Ovary (tissue), 10 donors: ENCODE measurements at regions of chr7 and their contacts with region 1.

Region 1: DNA sequence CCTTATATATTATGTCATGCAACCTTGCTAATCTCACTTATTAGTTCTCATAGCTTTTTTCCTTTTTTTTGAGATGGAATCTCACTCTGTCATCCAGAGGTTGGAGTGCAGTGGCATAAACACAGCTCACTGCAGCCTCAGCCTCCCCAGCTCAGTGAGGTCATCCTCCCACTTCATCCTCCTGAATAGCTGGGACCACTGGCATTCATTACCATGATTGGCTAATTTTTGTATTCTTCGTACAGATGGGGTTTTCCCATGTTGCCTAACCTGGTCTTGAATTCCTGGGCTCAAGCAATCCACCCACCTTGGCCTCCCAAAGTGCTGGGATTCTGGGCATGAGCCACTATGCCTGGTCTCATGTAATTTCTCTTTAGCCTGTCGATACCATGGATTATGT is 89.1 kb upstream of the TRIM24 start:
- DNase-seq: no peak
- H3K4me3 ChIP-seq: no peak overlapping the region
- H3K27ac ChIP-seq: no peak overlapping the region
- H3K4me1 ChIP-seq: no peaks in the 10 kb centered on the region
- H3K27me3 ChIP-seq: no peaks in the 10 kb centered on the region
- CTCF ChIP-seq: no peak
- EP300 ChIP-seq: no peak
- POLR2A ChIP-seq: no peak

Region 2: DNA sequence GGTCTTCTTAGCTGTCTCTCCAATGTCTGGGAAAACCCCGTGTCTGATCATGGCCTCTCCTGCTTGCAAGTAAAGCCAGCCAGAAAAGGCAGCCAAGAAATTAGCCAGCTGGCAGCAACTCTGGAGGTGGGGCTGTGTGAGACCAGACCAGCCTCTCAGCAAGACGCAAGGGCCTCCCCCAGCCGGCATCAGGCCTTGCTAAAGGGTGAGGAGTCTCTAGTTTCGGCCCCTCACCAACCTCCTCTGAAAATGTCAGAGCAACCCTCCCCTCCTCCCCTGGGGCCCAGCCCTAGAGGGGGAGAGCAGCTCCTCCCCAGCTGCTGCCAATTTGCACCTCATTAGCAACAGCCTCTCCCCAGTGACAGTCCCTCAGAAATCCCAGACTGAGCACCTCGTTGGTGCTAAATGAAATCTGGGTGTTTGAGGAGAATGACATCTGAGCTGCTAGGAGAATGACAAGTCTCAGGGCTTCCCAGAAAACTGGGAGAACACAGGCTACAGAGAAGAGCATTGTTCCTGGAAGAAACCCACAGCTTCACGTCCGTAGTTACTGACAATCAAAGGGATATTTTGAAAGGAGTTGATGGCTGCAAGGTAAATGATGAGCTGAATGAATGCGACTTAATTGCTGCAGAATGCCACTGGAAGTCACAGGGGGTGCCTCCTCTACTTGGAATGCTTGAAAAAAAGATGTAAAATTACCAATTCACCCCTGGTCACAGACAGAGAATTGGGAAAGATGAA is 550.1 kb before region 1 on chr7:
- intact Hi-C with region 1: no loop called
- DNase-seq: peak in 4 of 5 donors; percentile 10 to 42 (median 25)
- H3K4me3 ChIP-seq: no peak overlapping the region
- H3K27ac ChIP-seq: no peak overlapping the region
- H3K4me1 ChIP-seq: no peaks in the 10 kb centered on the region
- H3K27me3 ChIP-seq: no peaks in the 10 kb centered on the region
- CTCF ChIP-seq: no peak
- EP300 ChIP-seq: no peak
- POLR2A ChIP-seq: no peak

Region 3: DNA sequence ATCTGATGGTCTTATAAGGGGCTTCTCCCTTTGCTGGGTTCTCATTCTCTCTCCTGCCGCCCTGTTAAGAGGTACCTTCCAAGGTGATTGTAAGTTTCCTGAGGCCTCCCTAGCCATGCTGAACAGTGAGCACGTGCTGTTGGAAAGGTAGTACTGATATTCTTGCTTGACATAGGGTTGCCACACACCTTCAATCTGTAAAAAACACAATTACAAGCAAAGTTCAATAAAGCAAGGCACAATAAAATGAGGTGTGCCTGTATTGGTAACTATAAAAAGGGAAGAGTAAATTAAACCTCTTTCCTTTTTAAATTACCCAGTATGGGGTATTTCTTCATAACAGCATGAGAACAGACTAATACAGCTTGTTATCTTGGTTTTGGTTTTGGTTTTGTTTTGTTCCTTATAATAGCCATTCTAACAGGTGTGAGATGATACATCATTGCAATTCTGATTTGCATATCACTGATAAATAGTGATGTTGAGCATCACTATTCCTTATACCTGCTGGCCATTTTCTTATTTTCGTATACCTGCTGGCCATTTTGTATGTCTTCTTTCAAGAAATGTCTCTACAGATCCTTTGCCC is 75.8 kb before region 1 on chr7:
- intact Hi-C with region 1: loop called in 1 of 4 experiments (anchors 10 kb)
- DNase-seq: no peak
- H3K4me3 ChIP-seq: no peak overlapping the region
- H3K27ac ChIP-seq: no peak overlapping the region
- H3K4me1 ChIP-seq: peaks cover 3% of the 10 kb centered on the region
- H3K27me3 ChIP-seq: no peaks in the 10 kb centered on the region
- CTCF ChIP-seq: no peak
- EP300 ChIP-seq: no peak
- POLR2A ChIP-seq: no peak